ENCODE measurements at regions of chr10 and their contacts with region 1.

Region 1: DNA sequence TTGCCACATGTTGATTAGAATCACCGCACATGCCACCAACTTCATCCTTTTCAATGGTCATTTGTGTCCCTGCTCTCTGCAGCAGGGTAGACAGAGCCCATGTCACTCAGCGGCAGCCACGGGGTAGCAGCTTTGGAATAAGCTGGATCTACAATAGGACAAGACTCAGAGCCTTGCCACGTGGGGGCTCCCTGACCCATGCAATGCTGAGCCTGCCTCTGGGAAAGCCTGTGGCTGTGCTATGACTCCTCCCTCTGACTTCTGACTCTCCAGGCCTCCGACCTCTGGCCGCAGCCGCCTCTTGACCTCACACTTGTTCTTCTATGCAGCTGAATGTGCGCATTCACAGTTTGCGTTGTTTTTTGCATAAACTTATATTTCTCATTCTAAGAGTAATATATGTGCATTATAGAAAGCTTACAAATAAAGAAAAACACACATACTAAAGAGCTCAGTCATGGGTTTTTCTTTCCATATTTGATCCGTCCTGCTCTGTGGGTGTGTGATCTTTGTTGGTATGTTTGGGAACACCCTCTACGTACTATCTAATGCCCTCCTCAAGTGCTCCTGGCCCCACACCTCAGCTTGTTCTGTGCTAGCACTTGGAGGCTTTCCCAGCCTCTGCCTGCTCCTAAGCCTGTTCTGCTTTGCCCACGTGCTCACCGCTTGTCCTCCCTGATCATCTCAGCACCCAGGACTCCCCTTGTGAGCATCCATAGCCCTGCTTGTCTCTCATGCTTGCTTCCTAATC is 198.0 kb upstream of the MKI67 start:
- DNase-seq: peak; percentile 53 to 84
- ATAC-seq: peak; percentile 86 to 100 (median 99)
- H3K4me3 ChIP-seq: no peak overlapping the region
- H3K27ac ChIP-seq: no peak overlapping the region
- H3K4me1 ChIP-seq: peaks cover 5% of the 10 kb centered on the region
- H3K27me3 ChIP-seq: no peaks in the 10 kb centered on the region
- CTCF ChIP-seq: peak; percentile 46

Region 2: GRCh38 chr10:128380946-128381345 is 56.7 kb after region 1 on chr10:
- intact Hi-C with region 1: loop called in 1 of 2 experiments (anchors 1 kb)
- DNase-seq: no peak
- ATAC-seq: no peak
- H3K4me3 ChIP-seq: no peak overlapping the region
- H3K27ac ChIP-seq: no peak overlapping the region
- H3K4me1 ChIP-seq: peaks cover 16% of the 10 kb centered on the region
- H3K27me3 ChIP-seq: no peaks in the 10 kb centered on the region
- CTCF ChIP-seq: no peak

Region 3: GRCh38 chr10:128419466-128420019 is 95.3 kb after region 1 on chr10:
- intact Hi-C with region 1: loop called (anchors 1 to 2 kb)
- DNase-seq: no peak
- ATAC-seq: peak; percentile 64 to 99 (median 94)
- H3K4me3 ChIP-seq: no peak overlapping the region
- H3K27ac ChIP-seq: no peak overlapping the region
- H3K4me1 ChIP-seq: no peaks in the 10 kb centered on the region
- H3K27me3 ChIP-seq: peaks cover 0 to 2% (median 0%) of the 10 kb centered on the region in 3 donors
- CTCF ChIP-seq: peak; percentile 55

Region 4: DNA sequence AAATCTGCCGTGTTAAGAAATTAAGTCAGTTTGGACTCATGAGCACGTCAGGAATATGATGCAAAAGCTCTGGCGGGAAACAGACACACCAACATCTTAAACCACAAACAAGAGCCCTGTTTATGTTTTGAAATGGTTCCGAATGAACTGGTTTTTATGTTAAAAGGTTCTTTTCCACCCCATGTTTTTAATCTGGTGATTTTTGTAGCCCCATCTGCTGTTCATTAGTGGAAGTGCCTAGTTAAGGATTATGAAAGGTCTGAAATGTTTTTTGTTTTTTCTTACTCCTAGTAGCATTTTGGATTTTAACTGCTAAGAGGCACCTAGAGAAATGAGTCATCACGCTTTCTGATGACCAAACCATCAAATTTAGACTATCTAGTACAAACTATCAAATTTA is 206.0 kb after region 1 on chr10:
- intact Hi-C with region 1: loop called in 1 of 2 experiments (anchors 2 kb)
- DNase-seq: no peak
- ATAC-seq: no peak
- H3K4me3 ChIP-seq: no peak overlapping the region
- H3K27ac ChIP-seq: no peak overlapping the region
- H3K4me1 ChIP-seq: peaks cover 7% of the 10 kb centered on the region
- H3K27me3 ChIP-seq: peaks cover 0 to 2% (median 0%) of the 10 kb centered on the region in 3 donors
- CTCF ChIP-seq: peak; percentile 49